HEK293 (cell line): ENCODE measurements at regions of chr2 and their contacts with region 1.

Region 1: DNA sequence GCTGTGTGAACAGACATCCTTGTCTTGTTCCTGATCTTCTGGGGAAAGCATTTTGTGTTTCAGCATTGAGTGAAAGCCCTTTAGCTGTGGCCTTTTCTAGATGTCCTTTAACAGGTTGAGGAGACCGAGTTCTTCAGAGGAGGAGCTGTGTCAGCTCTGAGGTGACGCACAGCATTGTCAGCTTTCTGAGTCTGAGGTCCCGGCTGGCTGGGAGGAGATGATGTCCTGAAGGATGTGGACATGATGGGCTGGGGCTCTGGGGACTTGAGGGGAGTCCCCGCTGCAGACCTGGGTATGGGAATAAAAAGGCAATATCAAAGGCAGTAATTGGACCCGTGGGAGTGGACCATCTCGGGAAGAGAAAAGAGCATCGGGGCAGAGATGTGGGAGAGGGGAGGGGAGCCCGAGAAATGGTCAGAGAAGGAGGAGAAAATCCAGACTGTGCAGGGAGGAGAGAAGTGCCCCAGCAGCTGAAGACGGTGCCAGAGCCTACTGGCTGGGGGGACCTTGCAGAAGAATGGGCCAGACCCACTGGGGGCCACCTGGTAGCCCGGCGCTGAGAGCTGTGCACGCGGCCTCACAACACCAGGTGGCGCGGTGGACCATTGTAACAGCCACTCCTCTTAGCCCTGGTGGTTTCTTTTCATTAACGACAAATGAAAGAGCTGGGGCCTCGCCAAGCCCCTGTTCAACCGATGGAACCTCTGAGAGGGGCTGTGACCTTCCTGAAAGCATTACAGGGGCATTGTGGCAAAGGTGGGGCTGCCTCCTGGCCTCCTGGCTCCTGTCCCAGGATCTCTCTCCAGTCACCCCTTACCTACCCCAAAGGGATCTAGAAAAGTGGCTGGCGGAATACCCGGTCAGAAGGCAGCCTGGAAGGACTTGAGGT is 61.6 kb downstream of the ST3GAL5 start:
- H3K4me3 ChIP-seq: no peak overlapping the region
- H3K27ac ChIP-seq: no peak overlapping the region
- H3K4me1 ChIP-seq: no peaks in the 10 kb centered on the region
- CTCF ChIP-seq: peak; percentile 86

Region 2: GRCh38 chr2:85698184-85698879 is 128.9 kb before region 1 on chr2:
- CTCF ChIA-PET with region 1: no interaction called
- POLR2A ChIA-PET with region 1: no interaction called
- H3K4me3 ChIP-seq: no peak overlapping the region
- H3K27ac ChIP-seq: no peak overlapping the region
- H3K4me1 ChIP-seq: no peaks in the 10 kb centered on the region; the same call in 1 of the 2 replicates
- CTCF ChIP-seq: no peak

Region 3: DNA sequence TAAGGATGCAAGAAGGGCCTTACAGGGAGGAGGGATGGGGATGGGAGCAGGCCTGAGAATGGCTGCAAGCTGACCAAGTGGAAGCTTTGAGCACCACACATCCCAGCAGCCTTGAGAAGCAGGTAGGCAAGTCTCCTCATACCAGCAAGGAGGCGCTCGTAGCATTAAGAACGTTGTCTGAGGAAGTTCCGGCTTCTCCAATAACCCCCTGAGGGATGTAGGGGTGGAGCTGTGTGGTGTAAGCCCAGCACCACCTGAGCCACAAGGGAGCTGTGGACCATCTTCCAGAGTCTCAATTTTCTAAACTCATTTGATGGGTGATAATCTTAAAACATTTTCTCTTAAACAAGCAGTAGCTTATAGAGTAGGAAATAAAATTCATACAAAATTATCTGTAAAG is 10.9 kb after region 1 on chr2:
- CTCF ChIA-PET with region 1: interaction called, 23 read pairs
- POLR2A ChIA-PET with region 1: no interaction called
- H3K4me3 ChIP-seq: no peak overlapping the region
- H3K27ac ChIP-seq: no peak overlapping the region
- H3K4me1 ChIP-seq: no peaks in the 10 kb centered on the region
- CTCF ChIP-seq: no peak

Region 4: DNA sequence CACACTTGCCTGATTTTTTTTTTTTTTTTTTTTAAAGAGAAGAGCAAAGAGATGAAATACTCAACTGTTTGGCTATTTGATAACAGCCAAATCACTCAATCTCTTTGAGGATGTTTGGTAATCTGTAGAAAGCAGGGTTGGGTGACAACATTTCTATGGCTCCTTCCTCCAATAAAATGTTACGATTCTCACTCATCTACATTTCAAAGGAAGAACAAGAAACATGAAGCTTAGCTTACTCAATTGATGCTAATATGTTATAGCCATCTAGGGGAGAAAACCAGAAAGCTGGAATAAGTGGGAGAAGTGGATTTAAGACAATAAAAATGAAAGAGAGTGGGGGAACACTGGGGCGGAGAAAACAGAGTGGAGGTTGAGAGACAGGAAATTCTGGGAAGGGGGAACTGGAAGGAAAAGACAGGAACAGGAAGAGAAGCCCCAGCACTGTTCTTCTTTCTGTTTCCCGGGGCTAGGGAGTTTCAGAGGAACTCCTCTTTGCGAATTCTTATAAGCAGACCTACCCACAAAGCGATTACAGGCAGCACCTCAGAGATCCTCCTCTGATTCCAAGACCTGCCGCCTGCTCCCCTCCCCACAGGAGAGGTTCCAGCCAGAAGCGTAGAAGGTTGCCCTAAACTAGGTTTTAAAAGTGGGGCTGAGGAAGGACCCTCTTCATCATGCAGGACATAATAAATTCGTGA is 48.3 kb after region 1 on chr2:
- CTCF ChIA-PET with region 1: no interaction called
- POLR2A ChIA-PET with region 1: no interaction called
- H3K4me3 ChIP-seq: no peak overlapping the region
- H3K27ac ChIP-seq: no peak overlapping the region
- H3K4me1 ChIP-seq: no peaks in the 10 kb centered on the region; the same call in 1 of the 2 replicates
- CTCF ChIP-seq: no peak

Region 5: DNA sequence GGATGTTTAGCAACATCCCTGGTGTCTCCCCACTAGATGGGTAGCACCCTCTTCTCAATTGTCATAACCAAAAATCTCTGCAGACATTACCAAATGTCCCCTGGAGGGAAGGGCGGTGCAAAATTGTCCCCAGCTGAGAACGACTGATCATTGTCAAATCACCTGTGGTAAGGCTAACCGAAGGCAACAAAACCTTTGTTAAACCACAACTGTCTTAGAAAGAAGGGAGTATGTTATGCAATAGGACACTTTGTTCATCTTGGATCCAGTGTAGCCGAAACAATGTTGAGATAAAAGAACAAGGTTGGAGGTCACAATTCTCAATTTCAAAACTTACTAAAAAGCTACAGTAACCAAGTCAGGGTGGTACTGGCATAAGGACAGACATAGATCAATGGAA is 111.9 kb after region 1 on chr2:
- CTCF ChIA-PET with region 1: interaction called, 12 read pairs
- POLR2A ChIA-PET with region 1: no interaction called
- H3K4me3 ChIP-seq: no peak overlapping the region
- H3K27ac ChIP-seq: no peak overlapping the region
- H3K4me1 ChIP-seq: peaks cover 4% of the 10 kb centered on the region; the same call in 1 of the 2 replicates
- CTCF ChIP-seq: no peak

Region 6: DNA sequence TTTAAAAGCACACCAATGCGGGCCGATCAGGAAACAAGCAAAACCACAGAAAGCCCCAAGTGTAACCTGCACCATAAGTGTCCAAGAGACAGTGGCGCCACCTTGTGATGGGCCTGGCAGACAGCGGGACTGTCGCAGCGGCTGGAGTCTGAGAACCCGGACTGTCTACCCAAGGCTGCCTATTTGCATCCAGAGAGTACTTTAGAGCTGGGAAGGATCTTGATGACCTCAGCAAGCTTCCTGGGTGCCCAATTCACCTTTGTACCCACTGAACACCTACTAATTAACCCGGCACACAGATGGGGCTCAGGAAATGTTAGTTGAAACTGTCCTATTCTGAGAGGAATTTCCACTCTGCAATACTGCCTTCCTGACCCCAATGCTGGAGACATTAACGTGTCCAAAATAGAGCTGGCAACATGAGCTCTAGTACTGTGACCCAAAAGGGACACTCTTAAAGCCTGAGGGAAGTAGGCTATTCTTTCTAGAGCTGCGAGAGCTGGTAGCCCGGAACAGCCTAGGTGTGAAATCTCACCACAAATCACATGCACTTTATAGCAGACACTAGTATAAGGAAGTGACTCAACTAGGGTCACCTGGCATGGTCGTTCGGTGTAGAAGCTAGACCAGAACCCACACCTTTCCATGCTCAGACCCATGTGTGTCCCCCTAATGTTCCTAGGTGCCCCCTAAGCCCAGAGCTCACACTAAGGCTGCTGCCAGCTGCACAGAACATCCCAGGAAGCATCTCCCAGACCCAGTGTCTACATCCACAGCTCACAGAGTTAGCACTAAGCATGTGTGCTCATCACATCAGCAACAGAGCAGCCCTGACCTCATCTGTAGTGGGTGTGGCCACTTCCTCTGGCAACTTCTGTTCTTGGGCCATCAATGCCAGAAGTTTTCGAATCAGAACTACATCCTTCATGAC is 253.0 kb after region 1 on chr2:
- CTCF ChIA-PET with region 1: interaction called, 216 read pairs
- POLR2A ChIA-PET with region 1: interaction called, 5 read pairs
- H3K4me3 ChIP-seq: no peak overlapping the region
- H3K27ac ChIP-seq: no peak overlapping the region
- H3K4me1 ChIP-seq: no peaks in the 10 kb centered on the region
- CTCF ChIP-seq: peak; percentile 54

Region 7: GRCh38 chr2:86105252-86105968 is 278.2 kb after region 1 on chr2 and contains the start of gene POLR1A:
- CTCF ChIA-PET with region 1: interaction called, 5 read pairs
- POLR2A ChIA-PET with region 1: interaction called, 11 read pairs
- H3K4me3 ChIP-seq: peak within 1 kb of the TSS; percentile 92
- H3K27ac ChIP-seq: peak within 1 kb of the TSS; percentile 63
- H3K4me1 ChIP-seq: no peaks in the 10 kb centered on the region
- CTCF ChIP-seq: no peak